Activated T-helper 2 cell treated with anti-CD3 and anti-CD28 coated beads, Interferon-gamma antibody, Interleukin-2, Interleukin-4, amounts not matched to agents 10 μg/mL and 5 μg/mL and 100 μg/mL, durations not matched to agents 14 hours and 24 hours and 36 hours (primary cell): ENCODE measurements at regions of chr14 and their contacts with region 1.

Region 1: DNA sequence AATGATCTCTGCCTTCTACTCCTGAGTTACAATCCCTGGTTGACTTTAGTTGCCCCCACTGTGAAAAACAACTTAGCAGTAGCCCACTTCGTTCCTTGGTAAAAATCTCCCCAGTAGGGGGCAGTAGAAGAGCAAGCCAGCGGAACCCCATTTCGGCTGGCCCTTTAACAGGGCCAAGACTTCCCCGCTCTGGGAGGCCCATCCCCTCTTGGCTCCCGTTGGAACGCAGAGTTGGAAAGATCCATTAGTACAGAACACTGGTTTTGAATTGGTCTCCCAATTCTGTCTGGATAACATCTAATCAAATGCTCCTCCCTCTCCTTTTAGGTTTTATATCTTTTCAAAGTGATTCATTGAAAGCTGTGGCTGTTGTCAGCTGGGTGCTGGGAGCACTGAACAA is 1133.3 kb downstream of the BCL11B start:
- DNase-seq: peak; percentile 62
- H3K4me3 Mint-ChIP-seq: peak overlapping the region; percentile 53
- H3K27ac Mint-ChIP-seq: peak overlapping the region; percentile 61
- H3K4me1 Mint-ChIP-seq: peaks cover 76% of the 10 kb centered on the region
- H3K27me3 Mint-ChIP-seq: no peaks in the 10 kb centered on the region

Region 2: GRCh38 chr14:98160901-98161300 is 22.2 kb after region 1 on chr14:
- intact Hi-C with region 1: no loop called
- DNase-seq: no peak
- H3K4me3 Mint-ChIP-seq: no peak overlapping the region
- H3K27ac Mint-ChIP-seq: no peak overlapping the region
- H3K4me1 Mint-ChIP-seq: peaks cover 28% of the 10 kb centered on the region
- H3K27me3 Mint-ChIP-seq: no peaks in the 10 kb centered on the region

Region 3: DNA sequence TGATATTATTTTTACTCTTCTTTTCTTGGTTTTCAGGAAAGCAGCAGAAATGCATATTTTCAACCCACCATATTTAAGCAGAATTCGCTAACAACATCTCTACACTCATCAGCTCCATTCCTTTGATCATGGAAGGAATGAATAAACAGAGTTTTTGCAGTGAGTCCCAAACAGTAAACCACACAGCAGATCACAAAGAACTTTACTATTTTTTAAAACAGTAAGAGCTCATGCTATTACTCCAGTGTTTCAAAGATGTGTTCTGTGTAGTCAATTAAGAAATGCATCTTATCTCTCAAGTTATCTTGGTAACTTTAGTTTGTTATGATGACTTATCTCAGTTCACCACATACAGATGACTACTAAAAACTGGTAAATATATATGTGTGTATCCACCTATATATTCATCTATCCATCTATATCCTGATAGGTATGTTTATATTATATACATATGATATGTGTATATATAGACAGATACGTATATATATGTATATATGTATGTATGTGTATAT is 289.9 kb after region 1 on chr14:
- intact Hi-C with region 1: loop called (anchors 10 kb)
- DNase-seq: no peak
- H3K4me3 Mint-ChIP-seq: no peak overlapping the region
- H3K27ac Mint-ChIP-seq: no peak overlapping the region
- H3K4me1 Mint-ChIP-seq: peaks cover 23% of the 10 kb centered on the region
- H3K27me3 Mint-ChIP-seq: peaks cover 3% of the 10 kb centered on the region

Region 4: DNA sequence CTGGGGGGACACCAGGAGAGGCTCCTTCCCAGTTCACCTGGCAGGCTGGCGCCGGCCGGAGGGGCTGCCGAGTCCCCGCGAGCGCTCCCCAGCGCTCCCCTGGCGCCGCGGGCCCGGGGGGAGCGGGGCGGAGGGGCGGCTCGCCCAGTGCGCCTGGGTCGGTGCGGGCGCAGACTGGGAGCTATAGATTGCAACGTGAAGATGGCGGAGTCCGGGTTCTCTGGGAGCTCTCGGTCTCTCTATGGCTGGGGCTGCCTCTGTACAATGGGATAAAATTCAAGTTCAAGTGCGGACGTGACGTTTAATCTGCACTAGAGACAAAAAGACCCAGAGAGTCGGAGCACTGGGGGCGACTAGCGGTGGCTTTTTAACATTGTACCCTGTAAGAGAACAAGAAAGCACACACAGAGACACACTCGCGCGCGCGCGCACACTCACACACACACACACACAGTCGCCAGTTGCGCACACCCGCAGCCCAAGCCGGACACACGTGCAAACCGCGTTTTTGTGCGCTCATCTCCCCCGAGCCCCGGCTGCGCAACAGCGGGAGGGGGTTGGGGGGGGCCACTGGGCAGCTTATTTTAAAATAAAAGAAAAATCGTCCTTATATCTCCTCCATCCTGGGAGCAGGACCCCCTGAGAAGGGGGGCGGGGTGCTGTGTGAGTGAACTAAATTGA is 1133.4 kb after region 1 on chr14 and contains the start of gene BCL11B:
- intact Hi-C with region 1: loop called (anchors 2 kb)
- DNase-seq: peak; percentile 88
- H3K4me3 Mint-ChIP-seq: peak within 1 kb of the TSS; percentile 93
- H3K27ac Mint-ChIP-seq: peak within 1 kb of the TSS; percentile 94
- H3K4me1 Mint-ChIP-seq: peaks cover 37% of the 10 kb centered on the region
- H3K27me3 Mint-ChIP-seq: peaks cover 10% of the 10 kb centered on the region
- total RNA-seq, gene BCL11B: 34.1 and 34.9 TPM in 2 replicates